ENCODE measurements at regions of chr12 and their contacts with region 1.

Region 1: GRCh38 chr12:4663971-4664505 is 15.1 kb downstream of the NDUFA9 start:
- DNase-seq: peak; percentile 50
- H3K4me3 ChIP-seq: no peak overlapping the region
- CTCF ChIP-seq: no peak

Region 2: DNA sequence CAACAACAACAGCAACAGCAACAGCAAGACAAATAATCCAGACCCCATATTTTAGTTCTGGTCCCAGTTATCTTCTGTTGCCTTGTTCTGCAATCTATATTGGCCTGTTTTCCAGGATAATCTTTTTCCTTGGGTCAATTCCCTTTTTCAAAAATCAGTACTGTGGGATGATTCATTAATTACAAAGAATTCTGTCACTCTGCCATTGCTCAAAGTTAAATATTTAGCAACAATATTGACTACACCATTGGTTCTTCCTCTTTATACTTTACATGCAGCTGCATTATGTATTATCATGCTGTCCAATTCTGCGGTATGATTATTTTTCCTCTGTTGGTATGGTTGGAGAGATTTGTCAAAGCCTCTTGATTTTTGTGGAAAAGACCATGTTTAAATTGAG is 46.1 kb after region 1 on chr12:
- in situ Hi-C with region 1: loop called (anchors 5 kb)
- DNase-seq: no peak
- H3K4me3 ChIP-seq: no peak overlapping the region
- CTCF ChIP-seq: no peak

Region 3: DNA sequence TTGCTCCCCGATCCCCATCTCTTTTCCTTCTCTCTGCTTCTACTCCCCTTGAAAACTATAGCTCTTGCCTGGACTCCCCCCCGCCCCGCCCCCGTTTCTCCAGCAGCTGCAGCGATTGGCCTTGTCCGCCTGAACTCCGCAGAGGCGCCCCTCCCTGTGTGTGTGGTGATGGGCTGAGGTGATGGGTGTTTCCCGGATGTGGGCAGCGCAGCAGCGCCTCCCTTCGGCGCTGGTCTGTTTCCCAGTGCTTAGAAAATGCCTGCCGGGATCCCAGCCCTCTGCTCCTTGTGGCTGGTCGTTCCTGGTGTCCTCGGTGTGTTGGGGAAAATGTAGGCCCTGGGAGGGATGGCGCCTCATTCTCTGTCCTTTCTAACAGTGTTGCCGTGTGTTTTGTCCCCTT is 99.5 kb after region 1 on chr12:
- in situ Hi-C with region 1: loop called (anchors 5 kb)
- DNase-seq: no peak
- H3K4me3 ChIP-seq: no peak overlapping the region
- CTCF ChIP-seq: no peak